ENCODE measurements at regions of chr4 and their contacts with region 1.

Region 1: DNA sequence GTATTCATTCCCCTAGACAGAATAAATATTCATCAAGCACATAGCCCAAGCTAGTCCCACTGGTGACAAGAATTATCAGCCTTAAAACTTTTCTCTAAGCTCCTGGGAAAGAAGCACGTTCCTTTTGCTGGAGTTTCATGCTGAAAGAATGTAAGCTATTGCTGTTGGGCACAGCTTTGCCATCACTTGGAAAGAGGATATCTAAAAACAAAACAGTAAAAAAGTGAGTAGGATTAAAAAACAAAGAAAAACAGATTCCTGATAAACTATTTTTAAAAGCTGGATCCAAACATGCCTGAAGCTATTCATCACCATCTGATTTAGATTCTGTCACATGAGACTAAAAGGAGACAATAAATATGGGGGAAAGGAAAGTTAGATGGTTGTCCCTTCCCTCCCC is 176.8 kb downstream of the SCFD2 start:
- DNase-seq: no peak
- ATAC-seq: peak; percentile 28
- H3K4me3 ChIP-seq: no peak overlapping the region
- H3K27ac ChIP-seq: peak overlapping the region; percentile 82 to 88
- H3K4me1 ChIP-seq: peaks cover 0 to 7% of the 10 kb centered on the region in 2 donors
- H3K27me3 ChIP-seq: no peaks in the 10 kb centered on the region

Region 2: GRCh38 chr4:53055274-53055673 is 133.7 kb before region 1 on chr4:
- intact Hi-C with region 1: loop called in 1 of 2 experiments (anchors 2 kb)
- DNase-seq: no peak
- ATAC-seq: peak; percentile 23
- H3K4me3 ChIP-seq: no peak overlapping the region
- H3K27ac ChIP-seq: peak overlapping the region; percentile 36 to 97
- H3K4me1 ChIP-seq: peaks cover 0 to 6% of the 10 kb centered on the region in 2 donors
- H3K27me3 ChIP-seq: no peaks in the 10 kb centered on the region

Measured in aorta (tissue), 5 donors.